ENCODE measurements at regions of chr12 and their contacts with region 1.

Region 1: GRCh38 chr12:124321040-124321481 is 26.2 kb downstream of the RFLNA start:
- DNase-seq: no peak
- H3K4me3 ChIP-seq: no peak overlapping the region
- CTCF ChIP-seq: peak; percentile 94

Region 2: GRCh38 chr12:124044809-124045321 is 276.2 kb before region 1 on chr12:
- CTCF ChIA-PET with region 1: interaction called, 10 read pairs
- POLR2A ChIA-PET with region 1: no interaction called
- DNase-seq: no peak
- H3K4me3 ChIP-seq: no peak overlapping the region
- CTCF ChIP-seq: no peak

Region 3: GRCh38 chr12:124130717-124131670 is 190.1 kb before region 1 on chr12:
- CTCF ChIA-PET with region 1: no interaction called
- POLR2A ChIA-PET with region 1: no interaction called
- DNase-seq: no peak
- H3K4me3 ChIP-seq: no peak overlapping the region
- CTCF ChIP-seq: no peak

Region 4: GRCh38 chr12:124332068-124332672 is 11.1 kb after region 1 on chr12:
- CTCF ChIA-PET with region 1: interaction called, 18 read pairs
- POLR2A ChIA-PET with region 1: interaction called, 3 read pairs
- DNase-seq: no peak
- H3K4me3 ChIP-seq: no peak overlapping the region
- CTCF ChIP-seq: peak; percentile 31

Measured in AG04449 (cell line).